ENCODE measurements at regions of chr5 and their contacts with region 1.

Region 1: DNA sequence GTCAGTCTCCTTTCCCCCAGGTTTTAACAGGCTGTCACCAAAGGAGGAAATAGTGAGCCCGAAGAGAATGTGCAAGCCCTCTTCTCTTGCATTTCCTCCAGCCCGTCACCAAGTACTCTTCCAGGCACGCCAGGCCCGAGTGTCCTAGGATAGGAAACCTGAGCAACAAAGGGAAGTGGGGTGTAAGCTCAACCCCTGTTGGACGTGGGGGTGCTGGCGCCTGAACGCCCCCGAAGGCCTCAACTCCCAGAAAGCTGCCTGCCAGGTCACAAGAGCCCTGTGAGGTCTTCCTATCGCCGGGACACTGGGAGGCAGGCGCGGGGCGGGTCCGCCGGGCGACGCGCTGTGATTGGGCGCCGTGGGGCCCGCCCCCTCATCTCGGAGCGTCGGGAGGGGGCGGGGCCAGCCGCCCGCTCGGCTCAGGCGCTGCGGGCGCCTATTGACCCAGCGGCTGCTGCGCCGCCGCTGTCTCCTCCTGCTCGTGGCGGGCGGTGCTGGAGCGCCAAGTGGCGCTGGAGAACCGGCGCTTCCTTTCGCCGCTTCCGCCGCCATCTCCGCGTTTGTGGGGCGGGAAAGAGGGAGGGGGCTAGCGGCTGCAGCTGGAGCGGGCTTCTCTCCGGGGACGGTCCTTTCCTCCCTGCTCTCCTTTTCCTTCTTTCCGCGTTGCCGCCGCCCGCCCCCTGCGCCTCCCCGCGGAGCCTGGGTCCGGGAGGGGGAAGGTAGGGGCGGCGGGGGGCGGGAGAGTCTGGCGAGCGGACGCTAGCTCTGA is 572 bp upstream of the MAN2A1 start:
- DNase-seq: peak; percentile 94
- H3K4me3 ChIP-seq: peak overlapping the region; percentile 94
- H3K27ac ChIP-seq: peak overlapping the region; percentile 85
- H3K4me1 ChIP-seq: peaks cover 22% of the 10 kb centered on the region
- CTCF ChIP-seq: peak; percentile 35; the same call in 1 of the 2 replicates

Region 2: GRCh38 chr5:108381954-108382783 is 1307.0 kb before region 1 on chr5 and contains the start of gene FBXL17:
- CTCF ChIA-PET with region 1: no interaction called
- POLR2A ChIA-PET with region 1: no interaction called
- intact Hi-C with region 1: loop called (anchors 10 kb)
- DNase-seq: peak; percentile 96
- H3K4me3 ChIP-seq: peak within 1 kb of the TSS; percentile 92
- H3K27ac ChIP-seq: peak within 1 kb of the TSS; percentile 92
- H3K4me1 ChIP-seq: peaks cover 28% of the 10 kb centered on the region
- CTCF ChIP-seq: no peak
- total RNA-seq, gene FBXL17: 10.2 TPM in 2 replicates

Region 3: GRCh38 chr5:108748401-108749127 is 940.6 kb before region 1 on chr5:
- CTCF ChIA-PET with region 1: no interaction called
- POLR2A ChIA-PET with region 1: no interaction called
- intact Hi-C with region 1: loop called (anchors 5 kb)
- DNase-seq: peak; percentile 96
- H3K4me3 ChIP-seq: peak overlapping the region; percentile 81
- H3K27ac ChIP-seq: no peak overlapping the region
- H3K4me1 ChIP-seq: peaks cover 6% of the 10 kb centered on the region
- CTCF ChIP-seq: peak; percentile 56

Region 4: GRCh38 chr5:109921735-109922380 is 232.7 kb after region 1 on chr5:
- CTCF ChIA-PET with region 1: no interaction called
- POLR2A ChIA-PET with region 1: interaction called, 4 read pairs
- intact Hi-C with region 1: loop called (anchors 2 kb)
- DNase-seq: peak; percentile 93
- H3K4me3 ChIP-seq: peak overlapping the region; percentile 7
- H3K27ac ChIP-seq: peak overlapping the region; percentile 92
- H3K4me1 ChIP-seq: peaks cover 34% of the 10 kb centered on the region
- CTCF ChIP-seq: peak; percentile 28; the same call in 1 of the 2 replicates

Region 5: GRCh38 chr5:110625376-110625999 is 936.3 kb after region 1 on chr5:
- CTCF ChIA-PET with region 1: no interaction called
- POLR2A ChIA-PET with region 1: no interaction called
- intact Hi-C with region 1: loop called (anchors 10 kb)
- DNase-seq: peak; percentile 56
- H3K4me3 ChIP-seq: no peak overlapping the region
- H3K27ac ChIP-seq: no peak overlapping the region
- H3K4me1 ChIP-seq: no peaks in the 10 kb centered on the region
- CTCF ChIP-seq: peak; percentile 86

Region 6: GRCh38 chr5:111092062-111092853 is 1403.1 kb after region 1 on chr5 and contains the start of gene WDR36:
- CTCF ChIA-PET with region 1: no interaction called
- POLR2A ChIA-PET with region 1: no interaction called
- intact Hi-C with region 1: loop called (anchors 5 kb)
- DNase-seq: peak; percentile 94
- H3K4me3 ChIP-seq: peak within 1 kb of the TSS; percentile 91
- H3K27ac ChIP-seq: peak within 1 kb of the TSS; percentile 48
- H3K4me1 ChIP-seq: peaks cover 27% of the 10 kb centered on the region
- CTCF ChIP-seq: no peak
- total RNA-seq, gene WDR36: 39.1 and 46.5 TPM in 2 replicates

Measured in OCI-LY7 (cell line).